ENCODE measurements at regions of chr14 and their contacts with region 1.

Region 1: GRCh38 chr14:23120541-23121251 is 1.6 kb upstream of the CEBPE start:
- DNase-seq: peak; percentile 93
- ATAC-seq: peak; percentile 81

Region 2: DNA sequence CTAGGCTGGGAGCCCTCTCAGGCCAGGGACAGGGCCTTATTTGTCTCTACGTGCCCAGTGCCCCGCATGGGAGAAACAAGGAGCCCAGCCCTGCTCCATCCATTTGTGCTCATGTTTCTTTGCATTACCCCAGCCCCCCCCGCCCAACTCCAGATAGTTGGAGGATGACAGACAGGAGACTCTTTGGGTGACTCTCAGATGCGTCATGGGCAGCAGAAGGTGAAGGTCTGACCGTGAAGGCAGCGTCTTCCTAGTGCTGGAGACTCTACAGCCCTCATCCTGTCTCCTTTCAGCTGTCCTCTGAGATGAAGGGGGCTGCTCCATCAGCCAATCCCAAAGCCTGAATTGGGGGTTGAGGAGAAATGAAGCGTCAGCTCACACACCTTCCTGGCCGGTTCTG is 79.0 kb before region 1 on chr14:
- intact Hi-C with region 1: no loop called
- DNase-seq: no peak
- ATAC-seq: no peak

Region 3: GRCh38 chr14:23154964-23155587 is 34.4 kb after region 1 on chr14:
- intact Hi-C with region 1: loop called (anchors 2 kb)
- DNase-seq: peak; percentile 92
- ATAC-seq: peak; percentile 89

Region 4: GRCh38 chr14:23186913-23187654 is 66.4 kb after region 1 on chr14:
- intact Hi-C with region 1: loop called (anchors 1 kb)
- DNase-seq: no peak
- ATAC-seq: no peak

Region 5: GRCh38 chr14:23294734-23295561 is 174.3 kb after region 1 on chr14:
- intact Hi-C with region 1: loop called (anchors 5 kb)
- DNase-seq: no peak
- ATAC-seq: peak; percentile 68

Measured in Right ventricle myocardium inferior (tissue), 1 donor.